MCF 10A (cell line): ENCODE measurements at regions of chr7 and their contacts with region 1.

Region 1: DNA sequence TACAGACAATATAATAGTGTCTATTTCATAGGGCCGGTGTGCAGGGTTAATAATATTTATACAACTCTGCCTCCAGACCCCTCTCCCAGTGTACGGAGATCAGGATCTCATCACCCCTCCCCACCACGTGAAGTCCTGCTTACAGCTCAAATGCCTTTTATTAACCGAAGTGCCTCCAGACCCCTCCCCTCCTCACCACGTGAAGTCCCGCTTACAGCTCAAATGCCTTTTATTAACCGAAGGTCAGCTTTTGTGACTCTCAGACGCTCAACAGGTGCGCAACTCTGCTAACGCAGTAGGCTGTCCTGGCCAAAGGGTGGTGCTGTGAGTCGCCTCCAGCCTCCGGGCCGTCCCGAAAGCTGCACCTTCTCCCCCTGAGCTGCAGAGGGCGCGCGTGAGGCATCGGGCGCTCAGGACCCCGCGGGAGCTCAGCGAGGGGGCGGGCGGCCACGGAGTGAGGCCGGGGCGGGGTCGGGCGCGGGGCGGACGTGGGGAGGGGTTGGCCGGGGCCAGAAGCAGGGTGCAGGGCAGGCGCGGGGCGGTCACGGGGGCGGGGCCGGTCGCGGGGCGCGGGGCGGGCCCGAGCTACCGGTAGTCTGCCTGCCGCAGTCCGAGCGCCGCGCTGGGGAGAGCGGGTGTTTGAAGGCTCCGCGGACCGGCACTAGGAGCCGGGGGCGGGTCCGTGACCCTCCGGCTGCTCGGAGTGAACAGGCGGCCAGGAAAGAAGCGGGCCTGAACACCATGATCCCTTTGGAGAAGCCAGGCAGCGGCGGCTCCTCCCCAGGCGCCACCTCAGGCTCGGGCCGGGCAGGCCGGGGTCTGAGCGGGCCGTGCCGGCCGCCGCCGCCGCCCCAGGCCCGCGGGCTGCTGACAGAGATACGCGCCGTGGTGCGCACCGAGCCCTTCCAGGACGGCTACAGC is at the start of gene STK17A:
- DNase-seq: peak; percentile 94
- H3K4me3 Mint-ChIP-seq: peak within 1 kb of the TSS; percentile 93
- H3K27ac Mint-ChIP-seq: peak within 1 kb of the TSS; percentile 95
- H3K4me1 Mint-ChIP-seq: peaks cover 16% of the 10 kb centered on the region
- H3K27me3 Mint-ChIP-seq: no peaks in the 10 kb centered on the region
- CTCF ChIP-seq: peak; percentile 97
- total RNA-seq, gene STK17A: 27.2 and 51.6 TPM in 2 replicates

Region 2: DNA sequence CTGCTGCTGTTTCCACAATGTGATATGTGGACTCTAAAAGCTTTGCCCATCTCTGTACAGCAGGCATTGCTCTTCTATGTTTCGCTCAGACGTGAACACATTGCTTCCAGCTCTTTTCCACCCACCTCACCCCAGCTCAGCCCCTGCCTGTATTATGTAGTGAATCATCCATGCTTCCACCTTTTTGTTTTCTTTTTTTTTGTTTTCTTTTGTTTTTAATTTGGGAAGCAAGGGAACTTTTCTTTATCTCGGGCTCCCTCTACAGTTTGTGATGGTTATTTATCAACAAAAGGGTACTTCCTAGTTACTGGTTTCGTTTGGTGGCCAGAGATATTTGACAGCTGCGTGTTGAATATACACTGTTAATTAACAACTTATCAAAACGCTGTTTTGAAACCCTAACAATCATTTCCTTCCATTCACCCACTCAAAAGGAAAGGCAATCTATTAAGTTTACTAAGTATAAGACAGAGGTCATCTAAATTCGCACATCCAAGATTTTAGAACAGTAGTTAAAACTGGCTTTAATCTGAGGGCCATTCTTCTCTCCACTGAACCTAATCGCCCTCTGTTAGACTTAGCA is 127.7 kb before region 1 on chr7:
- CTCF ChIA-PET with region 1: interaction called, 14 read pairs
- POLR2A ChIA-PET with region 1: no interaction called
- intact Hi-C with region 1: loop called (anchors 2 kb)
- DNase-seq: peak; percentile 71
- H3K4me3 Mint-ChIP-seq: no peak overlapping the region
- H3K27ac Mint-ChIP-seq: no peak overlapping the region
- H3K4me1 Mint-ChIP-seq: peaks cover 6% of the 10 kb centered on the region
- H3K27me3 Mint-ChIP-seq: no peaks in the 10 kb centered on the region
- CTCF ChIP-seq: peak; percentile 48

Region 3: GRCh38 chr7:43553999-43554398 is 28.8 kb before region 1 on chr7:
- CTCF ChIA-PET with region 1: interaction called, 10 read pairs
- POLR2A ChIA-PET with region 1: interaction called, 39 read pairs
- intact Hi-C with region 1: no loop called
- DNase-seq: peak; percentile 84
- H3K4me3 Mint-ChIP-seq: no peak overlapping the region
- H3K27ac Mint-ChIP-seq: peak overlapping the region; percentile 90
- H3K4me1 Mint-ChIP-seq: peaks cover 40% of the 10 kb centered on the region
- H3K27me3 Mint-ChIP-seq: no peaks in the 10 kb centered on the region
- CTCF ChIP-seq: no peak

Region 4: GRCh38 chr7:43625453-43625852 is 42.7 kb after region 1 on chr7:
- CTCF ChIA-PET with region 1: interaction called, 19 read pairs
- POLR2A ChIA-PET with region 1: interaction called, 11 read pairs
- intact Hi-C with region 1: no loop called
- DNase-seq: no peak
- H3K4me3 Mint-ChIP-seq: no peak overlapping the region
- H3K27ac Mint-ChIP-seq: peak overlapping the region; percentile 15
- H3K4me1 Mint-ChIP-seq: peaks cover 20% of the 10 kb centered on the region
- H3K27me3 Mint-ChIP-seq: no peaks in the 10 kb centered on the region
- CTCF ChIP-seq: no peak

Region 5: GRCh38 chr7:43693687-43694398 is 111.1 kb after region 1 on chr7:
- CTCF ChIA-PET with region 1: interaction called, 211 read pairs
- POLR2A ChIA-PET with region 1: interaction called, 182 read pairs
- intact Hi-C with region 1: no loop called
- DNase-seq: peak; percentile 43
- H3K4me3 Mint-ChIP-seq: no peak overlapping the region
- H3K27ac Mint-ChIP-seq: no peak overlapping the region
- H3K4me1 Mint-ChIP-seq: peaks cover 4% of the 10 kb centered on the region
- H3K27me3 Mint-ChIP-seq: no peaks in the 10 kb centered on the region
- CTCF ChIP-seq: no peak

Region 6: GRCh38 chr7:43729214-43729923 is 146.6 kb after region 1 on chr7 and contains the start of gene COA1:
- CTCF ChIA-PET with region 1: interaction called, 5 read pairs
- POLR2A ChIA-PET with region 1: interaction called, 34 read pairs
- intact Hi-C with region 1: loop called (anchors 2 kb)
- DNase-seq: peak; percentile 89
- H3K4me3 Mint-ChIP-seq: peak within 1 kb of the TSS; percentile 87
- H3K27ac Mint-ChIP-seq: peak within 1 kb of the TSS; percentile 77
- H3K4me1 Mint-ChIP-seq: peaks cover 4% of the 10 kb centered on the region
- H3K27me3 Mint-ChIP-seq: no peaks in the 10 kb centered on the region
- CTCF ChIP-seq: no peak
- total RNA-seq, gene COA1: 65.5 and 68.5 TPM in 2 replicates

Region 7: GRCh38 chr7:43799589-43799988 is 216.8 kb after region 1 on chr7:
- CTCF ChIA-PET with region 1: interaction called, 6 read pairs
- POLR2A ChIA-PET with region 1: interaction called, 6 read pairs
- intact Hi-C with region 1: loop called (anchors 1 kb)
- DNase-seq: peak; percentile 54
- H3K4me3 Mint-ChIP-seq: no peak overlapping the region
- H3K27ac Mint-ChIP-seq: peak overlapping the region; percentile 76
- H3K4me1 Mint-ChIP-seq: no peaks in the 10 kb centered on the region
- H3K27me3 Mint-ChIP-seq: no peaks in the 10 kb centered on the region
- CTCF ChIP-seq: no peak